ENCODE measurements at regions of chr22 and their contacts with region 1.

Region 1: GRCh38 chr22:37608477-37609239 is at the start of gene GGA1:
- DNase-seq: peak; percentile 99
- ATAC-seq: peak; percentile 82
- H3K4me3 Mint-ChIP-seq: peak within 1 kb of the TSS; percentile 91
- H3K27ac Mint-ChIP-seq: peak within 1 kb of the TSS; percentile 94
- H3K4me1 Mint-ChIP-seq: peaks cover 49% of the 10 kb centered on the region
- H3K27me3 Mint-ChIP-seq: no peaks in the 10 kb centered on the region
- CTCF ChIP-seq: no peak
- total RNA-seq, gene GGA1: 59.7 to 62.8 TPM

Region 2: DNA sequence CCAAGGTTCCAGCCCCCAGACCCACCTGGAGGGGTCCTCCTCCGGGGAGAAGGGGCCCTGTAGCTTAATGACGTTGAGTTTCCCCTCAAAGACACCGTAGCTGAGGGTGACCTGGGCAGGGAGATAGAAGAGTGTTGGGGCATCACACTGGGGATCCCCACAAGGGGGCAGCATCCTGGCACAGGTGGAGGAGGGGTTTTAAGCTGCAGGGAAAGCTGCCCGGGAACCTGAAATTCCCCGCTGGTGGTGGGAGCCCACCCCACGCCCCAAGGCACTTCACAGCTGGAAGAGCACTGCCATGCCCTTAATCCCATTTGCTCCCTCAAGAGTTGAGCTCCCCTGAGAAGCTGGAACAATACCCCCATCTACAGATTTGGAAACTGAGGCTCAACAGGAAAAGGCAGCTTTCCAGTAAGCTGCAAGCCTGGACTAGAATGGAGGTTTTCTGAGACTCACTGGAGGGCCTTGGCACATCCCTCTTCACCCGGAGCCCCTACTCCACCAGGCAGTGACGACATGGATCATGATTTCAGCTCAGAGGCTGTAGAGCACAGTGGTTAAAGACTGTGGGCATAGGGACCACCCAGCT is 136.1 kb before region 1 on chr22:
- CTCF ChIA-PET with region 1: no interaction called
- POLR2A ChIA-PET with region 1: no interaction called
- intact Hi-C with region 1: no loop called
- DNase-seq: peak; percentile 48
- ATAC-seq: no peak
- H3K4me3 Mint-ChIP-seq: no peak overlapping the region
- H3K27ac Mint-ChIP-seq: peak overlapping the region; percentile 42
- H3K4me1 Mint-ChIP-seq: peaks cover 5% of the 10 kb centered on the region
- H3K27me3 Mint-ChIP-seq: no peaks in the 10 kb centered on the region
- CTCF ChIP-seq: peak; percentile 70

Region 3: GRCh38 chr22:37486224-37486845 is 122.3 kb before region 1 on chr22 and contains the start of gene MFNG:
- CTCF ChIA-PET with region 1: interaction called, 11 read pairs
- POLR2A ChIA-PET with region 1: interaction called, 7 read pairs
- intact Hi-C with region 1: no loop called
- DNase-seq: peak; percentile 87
- ATAC-seq: peak; percentile 76
- H3K4me3 Mint-ChIP-seq: peak within 1 kb of the TSS; percentile 93
- H3K27ac Mint-ChIP-seq: peak within 1 kb of the TSS; percentile 97
- H3K4me1 Mint-ChIP-seq: peaks cover 51% of the 10 kb centered on the region
- H3K27me3 Mint-ChIP-seq: no peaks in the 10 kb centered on the region
- CTCF ChIP-seq: no peak
- total RNA-seq, gene MFNG: 155 to 160 TPM

Region 4: DNA sequence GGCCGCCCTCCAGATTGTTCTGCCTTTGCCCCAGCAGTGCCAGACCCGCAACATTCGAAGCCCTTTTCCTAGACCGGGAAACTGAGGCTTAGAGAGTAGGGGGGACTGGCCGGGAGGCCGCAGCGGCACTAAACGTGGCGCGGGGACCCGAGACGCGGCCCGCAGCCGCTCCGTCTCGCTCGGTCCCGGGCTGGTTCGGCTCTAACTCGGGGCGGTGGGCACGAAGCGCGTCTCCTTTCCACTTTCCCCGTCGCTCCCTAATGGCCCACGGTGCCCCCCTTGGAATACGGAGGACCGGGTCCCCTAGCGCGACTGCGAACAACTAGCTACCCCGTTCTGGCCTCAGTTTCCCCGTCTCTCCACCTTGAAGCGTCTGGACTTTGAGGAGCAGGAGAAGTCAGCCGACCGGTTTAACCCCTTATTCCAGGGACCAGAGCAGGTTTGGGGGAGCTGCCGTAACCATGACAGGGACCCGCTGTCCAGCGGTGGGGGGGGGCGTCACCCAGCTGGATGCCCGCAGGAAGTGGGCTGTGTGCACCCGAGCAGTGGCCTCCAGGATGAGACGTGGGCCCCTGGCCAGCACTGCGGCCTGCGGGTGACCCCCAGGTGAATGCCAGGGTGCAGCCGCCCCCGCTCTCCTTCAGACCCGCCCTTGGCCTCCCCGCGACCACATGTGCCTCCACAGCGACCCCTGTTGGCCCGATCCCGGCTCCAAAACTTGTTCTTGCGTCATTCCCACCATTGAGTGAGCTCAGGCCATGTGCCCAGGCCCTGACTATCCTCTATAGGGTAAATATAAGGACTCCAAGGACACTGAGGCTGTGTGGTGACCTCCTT is 47.2 kb before region 1 on chr22:
- CTCF ChIA-PET with region 1: interaction called, 41 read pairs
- POLR2A ChIA-PET with region 1: interaction called, 4 read pairs
- intact Hi-C with region 1: no loop called
- DNase-seq: peak; percentile 95
- ATAC-seq: peak; percentile 68
- H3K4me3 Mint-ChIP-seq: peak overlapping the region; percentile 50
- H3K27ac Mint-ChIP-seq: peak overlapping the region; percentile 65
- H3K4me1 Mint-ChIP-seq: peaks cover 27% of the 10 kb centered on the region
- H3K27me3 Mint-ChIP-seq: peaks cover 49% of the 10 kb centered on the region
- CTCF ChIP-seq: peak; percentile 82

Region 5: DNA sequence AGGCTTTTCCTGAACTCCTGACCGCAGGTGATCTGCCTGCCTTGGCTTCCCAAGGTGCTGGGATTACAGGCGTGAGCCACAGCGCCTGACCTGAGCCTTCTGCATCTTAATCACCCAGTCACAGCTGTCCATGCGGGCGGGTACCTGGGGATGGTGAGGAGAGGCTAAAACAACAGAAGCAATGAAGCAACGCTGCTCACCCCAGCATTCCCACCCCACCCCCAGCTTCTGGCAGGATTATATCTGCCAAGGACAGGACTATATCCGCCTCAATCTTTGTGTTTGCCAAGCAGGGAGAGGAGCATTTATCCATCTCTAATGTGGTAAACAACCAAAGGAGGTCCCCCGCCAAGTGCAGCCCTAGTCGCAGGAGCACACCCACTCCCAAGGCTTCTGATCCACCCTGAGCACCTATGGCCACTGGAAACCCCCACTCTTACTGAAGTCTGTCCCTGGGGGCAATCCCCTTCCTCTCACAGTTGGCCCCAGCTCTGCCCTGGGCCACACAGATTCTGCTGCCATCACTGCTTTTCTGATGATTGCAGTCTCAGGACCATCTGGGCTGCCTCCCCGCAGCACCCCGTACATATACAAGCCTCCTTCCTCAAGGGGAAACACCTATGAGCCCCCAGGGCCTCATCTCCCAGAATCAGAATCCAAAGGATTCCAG is 20.0 kb before region 1 on chr22:
- CTCF ChIA-PET with region 1: interaction called, 119 read pairs
- POLR2A ChIA-PET with region 1: interaction called, 12 read pairs
- intact Hi-C with region 1: no loop called
- DNase-seq: no peak
- ATAC-seq: no peak
- H3K4me3 Mint-ChIP-seq: no peak overlapping the region
- H3K27ac Mint-ChIP-seq: no peak overlapping the region
- H3K4me1 Mint-ChIP-seq: peaks cover 11% of the 10 kb centered on the region
- H3K27me3 Mint-ChIP-seq: peaks cover 3% of the 10 kb centered on the region
- CTCF ChIP-seq: no peak

Region 6: GRCh38 chr22:37633625-37634416 is 25.2 kb after region 1 on chr22:
- CTCF ChIA-PET with region 1: interaction called, 1,770 read pairs
- POLR2A ChIA-PET with region 1: interaction called, 26 read pairs
- intact Hi-C with region 1: no loop called
- DNase-seq: peak; percentile 90
- ATAC-seq: peak; percentile 66
- H3K4me3 Mint-ChIP-seq: peak overlapping the region; percentile 69
- H3K27ac Mint-ChIP-seq: peak overlapping the region; percentile 88
- H3K4me1 Mint-ChIP-seq: peaks cover 79% of the 10 kb centered on the region
- H3K27me3 Mint-ChIP-seq: no peaks in the 10 kb centered on the region
- CTCF ChIP-seq: peak; percentile 20

Region 7: GRCh38 chr22:37676736-37677492 is 68.3 kb after region 1 on chr22:
- CTCF ChIA-PET with region 1: interaction called, 1,770 read pairs
- POLR2A ChIA-PET with region 1: interaction called, 12 read pairs
- intact Hi-C with region 1: no loop called
- DNase-seq: peak; percentile 98
- ATAC-seq: peak; percentile 84
- H3K4me3 Mint-ChIP-seq: peak overlapping the region; percentile 77
- H3K27ac Mint-ChIP-seq: peak overlapping the region; percentile 93
- H3K4me1 Mint-ChIP-seq: peaks cover 70% of the 10 kb centered on the region
- H3K27me3 Mint-ChIP-seq: no peaks in the 10 kb centered on the region
- CTCF ChIP-seq: no peak

Measured in activated CD8-positive, alpha-beta T cell treated with anti-CD3 and anti-CD28 coated beads for 36 hours (primary cell).